GM12878 (cell line): ENCODE measurements at regions of chr22 and their contacts with region 1.

Region 1: GRCh38 chr22:33896575-33897447 is 23.5 kb downstream of the LARGE1 start:
- DNase-seq: no peak
- ATAC-seq: peak; percentile 75
- H3K4me3 ChIP-seq: peak overlapping the region; percentile 51
- H3K27ac ChIP-seq: peak overlapping the region; percentile 95
- H3K4me1 ChIP-seq: peaks cover 38% of the 10 kb centered on the region
- H3K27me3 ChIP-seq: no peaks in the 10 kb centered on the region
- CTCF ChIP-seq: no peak
- EP300 ChIP-seq: no peak
- POLR2A ChIP-seq: peak; percentile 56
- RAD21 ChIP-seq: no peak

Region 2: GRCh38 chr22:33908171-33909074 is 11.6 kb after region 1 on chr22:
- CTCF ChIA-PET with region 1: no interaction called
- POLR2A ChIA-PET with region 1: interaction called, 4 read pairs
- RAD21 ChIA-PET with region 1: no interaction called
- SMC1A ChIA-PET with region 1: interaction called, 10 read pairs
- in situ Hi-C with region 1: no loop called
- intact Hi-C with region 1: no loop called
- DNase-seq: no peak
- ATAC-seq: no peak
- H3K4me3 ChIP-seq: no peak overlapping the region
- H3K27ac ChIP-seq: no peak overlapping the region
- H3K4me1 ChIP-seq: no peaks in the 10 kb centered on the region
- H3K27me3 ChIP-seq: no peaks in the 10 kb centered on the region
- CTCF ChIP-seq: no peak
- EP300 ChIP-seq: no peak
- POLR2A ChIP-seq: no peak
- RAD21 ChIP-seq: no peak